K562 (cell line): ENCODE measurements at regions of chr5 and their contacts with region 1.

Region 1: GRCh38 chr5:110757118-110757729 is 18.4 kb downstream of the SLC25A46 start:
- DNase-seq: peak; percentile 21 to 58 (median 32)
- ATAC-seq: peak; percentile 85
- H3K4me3 ChIP-seq: no peak overlapping the region
- H3K27ac ChIP-seq: no peak overlapping the region
- H3K4me1 ChIP-seq: no peaks in the 10 kb centered on the region
- H3K27me3 ChIP-seq: no peaks in the 10 kb centered on the region
- CTCF ChIP-seq: peak; percentile 13 to 67 (median 44); a peak in 4 of 6 replicates
- EP300 ChIP-seq: no peak
- POLR2A ChIP-seq: no peak
- RAD21 ChIP-seq: peak; percentile 62 to 72

Region 2: DNA sequence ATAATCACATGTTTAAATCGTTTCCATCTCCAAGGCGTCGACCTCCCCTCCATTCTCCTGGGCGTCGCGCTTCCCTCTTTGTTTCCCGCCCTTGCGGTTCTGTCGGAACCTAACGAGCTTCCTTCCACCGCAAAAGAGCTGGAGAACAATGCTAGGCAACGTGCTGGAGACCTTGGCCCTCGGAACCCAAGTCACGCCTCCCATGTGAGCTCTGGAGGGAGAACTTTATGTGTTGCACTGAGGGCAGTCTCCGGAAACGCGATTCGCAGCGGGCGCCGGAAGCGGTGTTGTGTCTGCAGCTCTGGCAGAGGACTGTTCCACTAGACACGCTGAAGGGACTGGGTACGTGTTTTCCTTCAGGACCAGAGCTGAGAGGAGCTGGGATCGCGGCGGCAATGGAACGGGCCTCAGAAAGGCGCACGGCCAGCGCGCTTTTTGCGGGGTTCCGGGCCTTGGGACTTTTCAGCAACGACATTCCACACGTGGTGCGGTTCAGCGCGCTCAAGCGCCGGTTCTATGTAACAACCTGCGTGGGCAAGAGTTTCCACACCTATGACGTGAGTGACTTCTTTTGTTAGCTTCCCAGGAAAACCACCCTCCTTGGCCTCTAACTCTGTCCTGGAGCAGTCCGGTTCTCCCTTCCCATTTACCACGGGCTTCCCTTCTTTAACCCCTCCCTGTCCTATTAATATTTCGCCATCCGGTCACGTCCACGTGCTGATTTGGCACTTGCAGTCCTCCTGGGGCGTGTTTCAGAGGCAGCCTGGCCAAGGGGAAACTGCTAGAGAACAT is 335.0 kb after region 1 on chr5 and contains the start of gene WDR36:
- CTCF ChIA-PET with region 1: no interaction called
- POLR2A ChIA-PET with region 1: no interaction called
- in situ Hi-C with region 1: no loop called
- intact Hi-C with region 1: loop called (anchors 10 kb)
- DNase-seq: peak; percentile 78 to 94 (median 80)
- ATAC-seq: peak; percentile 91
- H3K4me3 ChIP-seq: peak within 1 kb of the TSS; percentile 81
- H3K27ac ChIP-seq: peak within 1 kb of the TSS; percentile 81
- H3K4me1 ChIP-seq: peaks cover 4 to 14% of the 10 kb centered on the region in 2 experiments; a peak in 2 of 5 replicates
- H3K27me3 ChIP-seq: no peaks in the 10 kb centered on the region
- CTCF ChIP-seq: no peak
- EP300 ChIP-seq: peak; percentile 43; the same call in 1 of the 2 replicates
- POLR2A ChIP-seq: peak; percentile 93
- RAD21 ChIP-seq: 0 out of 4 replicates have a peak, but pooled peaks of 1 of the 2 experiments have one; percentile 9
- polyA plus RNA-seq, gene WDR36: 28.1 to 32.2 TPM

Region 3: DNA sequence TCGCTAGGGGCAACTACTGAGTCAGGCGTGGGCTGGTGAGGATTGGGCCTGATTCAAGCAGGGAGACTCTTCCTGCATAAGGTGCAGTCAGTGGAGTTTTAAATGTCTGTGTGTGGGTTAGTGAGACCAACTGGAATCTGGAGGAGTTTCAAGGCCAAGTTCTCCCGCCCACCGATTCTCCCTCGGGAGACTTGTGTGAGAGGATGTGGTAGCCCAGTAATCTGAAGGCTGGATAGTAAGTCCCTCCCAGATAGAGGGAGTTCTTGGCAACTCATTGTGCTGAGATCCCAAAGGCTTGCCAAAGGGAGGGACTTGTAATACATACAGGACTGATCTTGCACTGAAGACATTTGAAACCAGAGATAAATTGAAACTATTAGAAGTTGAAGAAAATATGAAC is 386.7 kb after region 1 on chr5:
- CTCF ChIA-PET with region 1: no interaction called
- POLR2A ChIA-PET with region 1: no interaction called
- in situ Hi-C with region 1: no loop called
- intact Hi-C with region 1: loop called (anchors 5 kb)
- DNase-seq: no peak
- ATAC-seq: no peak
- H3K4me3 ChIP-seq: no peak overlapping the region
- H3K27ac ChIP-seq: no peak overlapping the region
- H3K4me1 ChIP-seq: no peaks in the 10 kb centered on the region
- H3K27me3 ChIP-seq: no peaks in the 10 kb centered on the region
- CTCF ChIP-seq: no peak
- EP300 ChIP-seq: no peak
- POLR2A ChIP-seq: no peak
- RAD21 ChIP-seq: no peak

Region 4: GRCh38 chr5:111254613-111255012 is 497.4 kb after region 1 on chr5:
- CTCF ChIA-PET with region 1: no interaction called
- POLR2A ChIA-PET with region 1: no interaction called
- in situ Hi-C with region 1: loop called (anchors 25 kb)
- intact Hi-C with region 1: no loop called
- DNase-seq: no peak
- ATAC-seq: no peak
- H3K4me3 ChIP-seq: no peak overlapping the region
- H3K27ac ChIP-seq: no peak overlapping the region
- H3K4me1 ChIP-seq: no peaks in the 10 kb centered on the region
- H3K27me3 ChIP-seq: no peaks in the 10 kb centered on the region
- CTCF ChIP-seq: no peak
- EP300 ChIP-seq: no peak
- POLR2A ChIP-seq: no peak
- RAD21 ChIP-seq: no peak

Region 5: GRCh38 chr5:111278845-111279504 is 521.8 kb after region 1 on chr5:
- CTCF ChIA-PET with region 1: no interaction called
- POLR2A ChIA-PET with region 1: no interaction called
- in situ Hi-C with region 1: loop called (anchors 25 kb)
- intact Hi-C with region 1: loop called (anchors 2 kb)
- DNase-seq: peak; percentile 70 to 74 (median 72)
- ATAC-seq: peak; percentile 99
- H3K4me3 ChIP-seq: no peak overlapping the region
- H3K27ac ChIP-seq: no peak overlapping the region
- H3K4me1 ChIP-seq: no peaks in the 10 kb centered on the region
- H3K27me3 ChIP-seq: no peaks in the 10 kb centered on the region
- CTCF ChIP-seq: peak; percentile 75 to 81 (median 76)
- EP300 ChIP-seq: no peak
- POLR2A ChIP-seq: no peak
- RAD21 ChIP-seq: peak; percentile 67 to 79

Region 6: GRCh38 chr5:111512375-111513130 is 755.3 kb after region 1 on chr5 and contains the start of gene STARD4:
- CTCF ChIA-PET with region 1: no interaction called
- POLR2A ChIA-PET with region 1: no interaction called
- in situ Hi-C with region 1: loop called (anchors 25 kb)
- intact Hi-C with region 1: no loop called
- DNase-seq: peak; percentile 97
- ATAC-seq: peak; percentile 95
- H3K4me3 ChIP-seq: peak within 1 kb of the TSS; percentile 82
- H3K27ac ChIP-seq: peak within 1 kb of the TSS; percentile 93
- H3K4me1 ChIP-seq: peaks cover 5 to 29% of the 10 kb centered on the region in 2 experiments; a peak in 4 of 5 replicates
- H3K27me3 ChIP-seq: no peaks in the 10 kb centered on the region
- CTCF ChIP-seq: peak in 1 of 3 experiments; percentile 1; a peak in 1 of 6 replicates
- EP300 ChIP-seq: peak; percentile 58; the same call in 1 of the 2 replicates
- POLR2A ChIP-seq: peak; percentile 96
- RAD21 ChIP-seq: 0 out of 4 replicates have a peak, but pooled peaks of 1 of the 2 experiments have one; percentile 5
- polyA plus RNA-seq, gene STARD4: 28.4 to 33.3 TPM